ENCODE measurements at regions of chr19 and their contacts with region 1.

Region 1: GRCh38 chr19:58002384-58003173 is at the start of gene ZNF606:
- DNase-seq: peak; percentile 75 to 98 (median 84)

Region 2: DNA sequence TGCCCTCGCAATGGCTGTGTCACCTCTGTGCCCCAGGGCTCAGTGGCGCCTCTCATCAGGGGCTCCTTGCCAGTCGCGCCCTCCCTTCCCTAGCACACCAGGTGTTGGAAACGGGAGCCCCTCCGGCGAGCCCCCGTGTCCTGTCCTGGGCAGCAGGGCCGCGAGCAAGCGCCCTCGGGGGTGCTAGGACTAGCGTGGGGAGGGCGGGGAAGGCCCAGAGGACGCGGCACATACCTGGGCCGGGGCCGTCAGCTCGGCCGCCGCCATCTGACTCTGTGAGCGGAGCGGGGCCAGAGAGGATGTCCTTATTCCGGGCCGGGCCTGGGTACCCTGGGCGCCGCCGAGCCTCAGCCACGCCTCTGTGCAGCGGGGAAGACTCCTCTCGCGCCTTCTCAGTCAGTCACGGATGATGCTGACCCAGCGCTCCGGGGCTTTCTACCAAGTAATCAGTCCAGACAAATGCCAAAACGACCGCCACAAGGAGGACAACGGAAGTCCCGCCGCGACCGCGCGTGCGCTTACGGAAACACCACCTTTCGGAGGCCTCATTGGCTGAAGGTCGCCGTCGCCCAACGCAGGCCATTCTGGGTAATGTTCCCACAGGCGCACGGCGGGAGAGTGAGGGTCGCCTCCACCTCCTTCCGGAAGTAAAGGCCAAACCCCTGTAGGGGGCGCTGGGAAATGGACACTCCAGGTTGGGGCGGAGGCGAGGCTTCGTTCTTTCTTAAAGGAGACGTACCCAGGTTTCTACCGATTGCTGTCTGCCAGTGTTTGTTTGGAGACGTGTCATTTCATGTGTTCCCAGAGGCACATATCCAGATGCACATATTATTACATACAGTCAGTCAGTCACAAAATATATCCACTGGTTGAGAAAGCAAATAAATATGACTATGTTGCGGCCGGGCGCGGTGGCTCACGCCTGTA is 55.1 kb before region 1 on chr19 and contains the start of gene ZNF256:
- intact Hi-C with region 1: loop called (anchors 10 kb)
- DNase-seq: peak; percentile 87 to 99 (median 97)

Region 3: DNA sequence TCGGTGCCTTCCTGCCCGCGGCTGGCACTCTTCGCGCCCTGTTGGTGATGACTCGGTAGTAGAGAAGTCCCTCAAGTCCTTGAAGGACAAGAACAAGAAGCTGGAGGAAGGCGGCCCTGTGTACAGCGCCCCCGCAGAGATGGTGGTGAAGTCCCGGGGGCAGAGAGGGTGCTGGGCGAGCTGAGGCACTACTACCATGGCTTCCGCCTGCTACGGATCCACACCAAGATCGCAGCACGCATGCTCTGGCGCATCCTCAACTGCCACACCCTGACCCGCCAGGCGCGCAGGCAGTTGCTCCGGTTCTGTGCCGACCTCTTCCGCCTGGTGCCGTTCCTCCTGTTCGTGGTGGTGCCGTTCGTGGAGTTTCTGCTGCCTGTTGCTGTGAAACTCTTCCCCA is 42.3 kb after region 1 on chr19:
- intact Hi-C with region 1: no loop called
- DNase-seq: peak in 2 of 10 donors; percentile 24 to 71

Region 4: DNA sequence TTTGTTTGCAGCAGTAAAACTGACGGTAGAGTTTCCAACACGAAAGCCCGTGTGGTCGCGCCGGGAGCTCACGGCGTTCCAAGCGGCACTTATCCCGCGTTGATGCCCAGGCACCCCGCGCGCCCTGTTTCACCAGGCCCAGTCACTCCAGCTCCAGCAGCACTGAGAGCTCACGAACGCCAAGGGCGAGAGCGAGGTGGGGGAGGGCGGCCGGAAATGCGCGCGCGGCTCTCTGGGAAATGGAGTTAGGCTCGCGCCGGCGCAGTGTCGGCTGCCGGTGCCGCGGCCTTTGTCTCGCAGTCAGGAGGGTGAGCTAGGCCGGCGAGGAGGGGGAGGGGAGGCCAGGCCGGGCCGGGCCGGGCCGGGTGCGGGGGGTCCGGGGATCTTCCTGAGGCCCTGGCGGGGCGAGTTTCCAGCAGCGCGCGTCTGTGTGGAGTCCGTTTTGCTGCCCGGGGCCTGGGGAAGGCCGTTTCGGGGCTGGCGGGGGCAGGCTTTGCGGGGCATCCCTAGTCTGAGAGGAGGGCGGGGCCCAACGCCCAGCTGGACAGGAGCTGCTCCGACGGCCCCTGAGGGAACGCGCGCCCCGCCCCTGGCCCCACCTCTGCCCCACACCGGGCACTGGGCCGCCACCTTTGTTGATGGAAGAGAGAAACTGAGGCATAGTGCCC is 56.6 kb after region 1 on chr19 and contains the start of gene ZNF135:
- intact Hi-C with region 1: loop called (anchors 5 kb)
- DNase-seq: peak; percentile 76 to 98 (median 83)

Region 5: GRCh38 chr19:58278157-58279041 is 275.8 kb after region 1 on chr19 and contains the start of gene ZNF8:
- intact Hi-C with region 1: no loop called
- DNase-seq: peak; percentile 95 to 99 (median 96)

Region 6: DNA sequence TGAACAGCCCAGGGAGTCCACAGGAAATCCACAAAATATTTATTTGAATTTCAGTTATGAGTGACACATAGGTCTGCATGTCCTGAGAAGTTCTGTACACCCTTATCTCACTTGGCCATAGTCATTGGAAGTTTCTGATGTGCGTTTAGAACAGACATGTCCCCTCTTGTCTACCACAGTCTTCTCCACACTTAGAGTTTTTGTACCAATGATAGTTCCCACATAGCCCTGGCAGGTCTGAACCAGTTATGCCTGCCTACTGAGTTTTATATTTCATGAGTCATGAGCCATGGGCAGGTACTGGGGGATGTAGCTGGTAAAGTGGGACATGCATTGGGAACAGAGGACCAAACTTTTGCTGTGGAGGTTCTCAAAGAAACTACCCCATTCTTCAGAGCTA is 426.0 kb after region 1 on chr19:
- intact Hi-C with region 1: no loop called
- DNase-seq: no peak